ENCODE measurements at regions of chrX and their contacts with region 1.

Region 1: DNA sequence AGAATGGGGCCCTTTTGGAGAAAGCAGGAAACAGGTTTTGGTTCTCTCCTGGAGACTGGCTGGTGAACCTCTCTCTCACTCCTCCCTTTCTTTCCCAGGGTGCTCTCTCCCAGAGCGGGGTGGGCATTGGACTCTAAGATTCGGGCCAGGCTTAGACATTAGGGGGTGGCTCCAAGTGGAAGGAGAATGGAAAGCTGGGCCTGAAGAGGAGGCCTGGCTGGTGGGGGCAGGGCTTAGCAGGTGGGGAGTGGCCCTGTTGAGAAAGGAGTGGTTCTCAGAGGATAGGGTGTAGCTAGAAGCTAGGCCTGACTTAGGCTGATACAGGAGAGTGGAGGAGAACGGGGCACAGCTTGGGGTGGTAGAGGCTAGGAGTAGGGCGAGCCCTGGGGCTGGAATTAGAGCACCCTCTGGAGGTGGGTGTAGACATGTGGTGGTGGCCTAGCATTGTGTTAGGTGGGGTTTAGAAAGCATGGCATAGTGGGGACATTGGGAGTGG is 5.7 kb downstream of the PLP2 start:
- DNase-seq: peak in 1 of 5 donors; percentile 19
- H3K4me3 ChIP-seq: no peak overlapping the region
- H3K4me3 Mint-ChIP-seq: no peak overlapping the region
- H3K27ac ChIP-seq: no peak overlapping the region
- H3K27ac Mint-ChIP-seq: peak overlapping the region in 4 of 7 donors; percentile 8 to 68 (median 66)
- H3K4me1 ChIP-seq: peaks cover 15% of the 10 kb centered on the region
- H3K4me1 Mint-ChIP-seq: peaks cover 8 to 27% (median 15%) of the 10 kb centered on the region in 4 donors
- H3K27me3 ChIP-seq: no peaks in the 10 kb centered on the region
- H3K27me3 Mint-ChIP-seq: no peaks in the 10 kb centered on the region

Region 2: DNA sequence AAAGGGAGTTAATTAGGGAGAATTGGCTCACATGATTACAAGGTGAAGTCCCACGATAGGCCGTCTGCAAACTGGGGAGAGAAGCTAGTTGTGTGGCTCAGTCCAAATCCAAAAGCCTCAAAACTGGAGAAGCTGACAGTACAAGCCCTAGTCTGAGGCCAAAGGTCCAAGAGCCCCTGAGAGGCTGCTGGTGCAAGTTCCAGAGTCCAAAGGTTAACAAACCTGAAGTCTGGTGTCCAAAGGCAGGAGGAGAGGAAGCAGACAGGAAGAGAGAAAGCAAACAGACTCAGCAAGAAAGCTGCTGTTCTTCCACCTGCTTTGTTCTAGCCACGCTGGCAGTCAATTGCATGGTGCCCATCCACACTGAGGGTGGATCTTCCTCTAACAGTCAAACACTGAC is 1075.9 kb before region 1 on chrX:
- CTCF ChIA-PET with region 1: no interaction called
- POLR2A ChIA-PET with region 1: no interaction called
- intact Hi-C with region 1: no loop called
- DNase-seq: no peak
- H3K4me3 ChIP-seq: no peak overlapping the region
- H3K4me3 Mint-ChIP-seq: no peak overlapping the region
- H3K27ac ChIP-seq: no peak overlapping the region
- H3K27ac Mint-ChIP-seq: no peak overlapping the region
- H3K4me1 ChIP-seq: no peaks in the 10 kb centered on the region
- H3K4me1 Mint-ChIP-seq: no peaks in the 10 kb centered on the region
- H3K27me3 ChIP-seq: no peaks in the 10 kb centered on the region
- H3K27me3 Mint-ChIP-seq: peaks cover 0 to 1% of the 10 kb centered on the region in 2 donors

Region 3: GRCh38 chrX:49163555-49164419 is 13.6 kb before region 1 on chrX:
- CTCF ChIA-PET with region 1: interaction called, 9 read pairs
- POLR2A ChIA-PET with region 1: interaction called, 14 read pairs
- intact Hi-C with region 1: no loop called
- DNase-seq: peak; percentile 81 to 84 (median 82)
- H3K4me3 ChIP-seq: peak overlapping the region in 1 of 2 donors; percentile 50
- H3K4me3 Mint-ChIP-seq: peak overlapping the region; percentile 70 to 88 (median 80)
- H3K27ac ChIP-seq: peak overlapping the region; percentile 58
- H3K27ac Mint-ChIP-seq: peak overlapping the region; percentile 83 to 95 (median 92)
- H3K4me1 ChIP-seq: peaks cover 41% of the 10 kb centered on the region
- H3K4me1 Mint-ChIP-seq: peaks cover 14 to 41% (median 29%) of the 10 kb centered on the region in 4 donors
- H3K27me3 ChIP-seq: no peaks in the 10 kb centered on the region
- H3K27me3 Mint-ChIP-seq: no peaks in the 10 kb centered on the region